Gastrocnemius medialis (tissue), 4 donors: ENCODE measurements at regions of chr1 and their contacts with region 1.

Region 1: DNA sequence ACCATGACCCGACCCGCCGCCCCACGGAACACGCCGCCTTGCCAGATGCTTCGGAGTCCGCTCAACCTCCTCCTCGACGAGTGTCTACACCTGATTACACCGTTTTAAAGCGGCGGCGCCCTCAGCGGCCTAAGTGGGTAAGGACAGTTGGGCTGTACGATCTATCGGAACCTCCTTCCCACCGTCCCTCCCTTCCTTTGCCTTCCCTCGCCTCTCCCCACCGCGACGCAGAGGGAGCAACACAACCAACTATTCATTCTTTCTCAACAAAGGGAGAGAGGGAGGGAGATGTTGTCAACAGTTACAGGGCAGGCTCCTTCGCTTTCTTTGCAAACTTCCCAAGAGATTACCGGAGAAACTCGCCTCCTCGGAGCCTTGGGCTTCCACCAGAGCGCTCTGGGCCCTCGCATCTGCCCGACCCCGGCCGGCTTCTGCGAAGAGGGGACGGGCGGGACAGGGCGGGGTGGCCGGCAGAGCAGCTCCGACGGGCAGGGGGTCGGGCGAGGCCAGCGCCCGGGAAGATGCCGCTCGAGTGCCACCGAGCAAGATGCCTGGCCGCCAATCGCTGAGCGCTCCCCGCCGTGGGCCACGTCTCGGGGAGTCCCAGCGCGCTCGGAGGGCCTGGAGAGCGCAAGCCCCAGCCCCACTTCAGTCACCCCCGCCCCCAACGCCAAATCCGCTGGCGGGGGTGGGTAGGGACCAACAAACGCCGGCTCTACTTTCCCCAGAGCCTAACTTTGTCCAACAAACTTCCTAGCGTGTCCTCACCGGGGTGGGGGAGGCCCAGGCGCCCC is 683 bp downstream of the BCAR3 start:
- DNase-seq: peak; percentile 57 to 63
- ATAC-seq: peak; percentile 83 to 85
- H3K4me3 ChIP-seq: peak overlapping the region; percentile 71 to 87 (median 82)
- H3K27ac ChIP-seq: peak overlapping the region; percentile 73 to 80 (median 77)
- H3K4me1 ChIP-seq: peaks cover 0 to 21% of the 10 kb centered on the region in 2 donors
- H3K27me3 ChIP-seq: no peaks in the 10 kb centered on the region
- CTCF ChIP-seq: peak; percentile 42 to 66 (median 63)
- POLR2A ChIP-seq: peak; percentile 9 to 29

Region 2: GRCh38 chr1:93629099-93630059 is 51.6 kb before region 1 on chr1:
- in situ Hi-C with region 1: no loop called
- intact Hi-C with region 1: loop called (anchors 5 kb)
- DNase-seq: peak; percentile 55 to 62
- ATAC-seq: peak; percentile 83 to 90
- H3K4me3 ChIP-seq: no peak overlapping the region
- H3K27ac ChIP-seq: peak overlapping the region in 3 of 4 donors; percentile 18 to 77 (median 37)
- H3K4me1 ChIP-seq: peaks cover under 1 to 8% of the 10 kb centered on the region in 2 donors
- H3K27me3 ChIP-seq: no peaks in the 10 kb centered on the region
- CTCF ChIP-seq: peak; percentile 75 to 93 (median 80)
- POLR2A ChIP-seq: no peak